ENCODE measurements at regions of chr1 and their contacts with region 1.

Region 1: GRCh38 chr1:70440642-70441378 is 29.7 kb downstream of the CTH start:
- DNase-seq: no peak
- H3K4me3 ChIP-seq: no peak overlapping the region
- H3K27ac ChIP-seq: no peak overlapping the region
- H3K4me1 ChIP-seq: no peaks in the 10 kb centered on the region
- H3K27me3 ChIP-seq: no peaks in the 10 kb centered on the region
- CTCF ChIP-seq: no peak
- POLR2A ChIP-seq: no peak

Region 2: GRCh38 chr1:70509996-70510876 is 69.4 kb after region 1 on chr1:
- intact Hi-C with region 1: loop called (anchors 10 kb)
- DNase-seq: no peak
- H3K4me3 ChIP-seq: no peak overlapping the region
- H3K27ac ChIP-seq: no peak overlapping the region
- H3K4me1 ChIP-seq: no peaks in the 10 kb centered on the region
- H3K27me3 ChIP-seq: no peaks in the 10 kb centered on the region
- CTCF ChIP-seq: peak; percentile 28 to 60 (median 41)
- POLR2A ChIP-seq: no peak

Measured in vagina (tissue), 2 donors.